Gastrocnemius medialis (tissue), 4 donors: ENCODE measurements at regions of chr1 and their contacts with region 1.

Region 1: DNA sequence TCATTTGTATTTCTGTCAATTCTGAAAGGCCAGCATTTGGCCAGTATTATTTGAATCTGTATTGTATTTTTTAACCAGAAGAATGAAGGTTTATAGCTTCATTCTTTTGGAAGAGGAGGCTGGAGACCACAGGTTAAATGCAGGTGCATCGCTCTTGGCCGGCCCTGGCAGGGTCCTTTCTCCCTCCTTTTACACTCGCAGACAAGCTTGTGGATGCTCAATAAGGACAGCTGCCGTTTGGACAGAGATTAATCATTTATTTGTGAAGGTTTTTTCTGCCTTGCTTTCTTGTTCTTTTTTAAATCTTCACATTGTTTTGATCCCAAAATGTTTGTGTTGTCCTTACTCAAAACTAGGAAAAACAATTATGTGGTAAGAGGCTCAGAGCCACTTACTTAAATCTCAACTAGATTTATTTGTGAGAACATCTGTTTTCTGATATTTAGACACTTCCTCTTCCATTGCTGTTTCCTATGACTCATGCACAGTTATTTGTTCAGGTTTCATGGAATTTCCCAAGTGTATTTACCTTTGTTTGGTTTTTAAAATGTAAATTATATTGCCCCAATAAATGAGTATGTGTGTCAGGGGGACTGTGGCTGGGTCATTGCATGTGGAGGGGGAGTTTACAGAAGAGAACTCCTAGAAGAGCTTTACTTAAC is 46.7 kb upstream of the LAMC2 start:
- DNase-seq: no peak
- ATAC-seq: peak; percentile 29 to 31
- H3K4me3 ChIP-seq: no peak overlapping the region
- H3K27ac ChIP-seq: peak overlapping the region; percentile 62 to 76 (median 70)
- H3K4me1 ChIP-seq: peaks cover 11 to 18% of the 10 kb centered on the region in 2 donors
- H3K27me3 ChIP-seq: no peaks in the 10 kb centered on the region
- CTCF ChIP-seq: no peak
- POLR2A ChIP-seq: no peak

Region 2: GRCh38 chr1:182789138-182790076 is 350.0 kb before region 1 on chr1 and contains the start of gene NPL:
- in situ Hi-C with region 1: no loop called
- intact Hi-C with region 1: no loop called
- DNase-seq: peak; percentile 56 to 78
- ATAC-seq: peak; percentile 91 to 95
- H3K4me3 ChIP-seq: peak within 1 kb of the TSS; percentile 72 to 86 (median 78)
- H3K27ac ChIP-seq: peak within 1 kb of the TSS; percentile 81 to 87 (median 83)
- H3K4me1 ChIP-seq: peaks cover 7 to 9% of the 10 kb centered on the region in 2 donors
- H3K27me3 ChIP-seq: no peaks in the 10 kb centered on the region
- CTCF ChIP-seq: no peak
- POLR2A ChIP-seq: peak; percentile 81 to 97
- total RNA-seq, gene NPL: 2.7 to 6.5 (median 4.3) TPM

Region 3: GRCh38 chr1:183155939-183156338 is 16.5 kb after region 1 on chr1:
- in situ Hi-C with region 1: no loop called
- intact Hi-C with region 1: no loop called
- DNase-seq: no peak
- ATAC-seq: no peak
- H3K4me3 ChIP-seq: no peak overlapping the region
- H3K27ac ChIP-seq: no peak overlapping the region
- H3K4me1 ChIP-seq: no peaks in the 10 kb centered on the region
- H3K27me3 ChIP-seq: no peaks in the 10 kb centered on the region
- CTCF ChIP-seq: no peak
- POLR2A ChIP-seq: no peak

Region 4: DNA sequence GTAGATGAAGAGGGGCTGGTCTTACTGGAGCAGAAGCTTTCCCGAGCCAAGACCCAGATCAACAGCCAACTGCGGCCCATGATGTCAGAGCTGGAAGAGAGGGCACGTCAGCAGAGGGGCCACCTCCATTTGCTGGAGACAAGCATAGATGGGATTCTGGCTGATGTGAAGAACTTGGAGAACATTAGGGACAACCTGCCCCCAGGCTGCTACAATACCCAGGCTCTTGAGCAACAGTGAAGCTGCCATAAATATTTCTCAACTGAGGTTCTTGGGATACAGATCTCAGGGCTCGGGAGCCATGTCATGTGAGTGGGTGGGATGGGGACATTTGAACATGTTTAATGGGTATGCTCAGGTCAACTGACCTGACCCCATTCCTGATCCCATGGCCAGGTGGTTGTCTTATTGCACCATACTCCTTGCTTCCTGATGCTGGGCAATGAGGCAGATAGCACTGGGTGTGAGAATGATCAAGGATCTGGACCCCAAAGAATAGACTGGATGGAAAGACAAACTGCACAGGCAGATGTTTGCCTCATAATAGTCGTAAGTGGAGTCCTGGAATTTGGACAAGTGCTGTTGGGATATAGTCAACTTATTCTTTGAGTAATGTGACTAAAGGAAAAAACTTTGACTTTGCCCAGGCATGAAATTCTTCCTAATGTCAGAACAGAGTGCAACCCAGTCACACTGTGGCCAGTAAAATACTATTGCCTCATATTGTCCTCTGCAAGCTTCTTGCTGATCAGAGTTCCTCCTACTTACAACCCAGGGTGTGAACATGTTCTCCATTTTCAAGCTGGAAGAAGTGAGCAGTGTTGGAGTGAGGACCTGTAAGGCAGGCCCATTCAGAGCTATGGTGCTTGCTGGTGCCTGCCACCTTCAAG is 104.0 kb after region 1 on chr1:
- in situ Hi-C with region 1: loop called in 1 of 4 experiments (anchors 10 kb)
- intact Hi-C with region 1: loop called (anchors 2 kb)
- DNase-seq: peak; percentile 62 to 84
- ATAC-seq: peak; percentile 41 to 63
- H3K4me3 ChIP-seq: no peak overlapping the region
- H3K27ac ChIP-seq: peak overlapping the region; percentile 63 to 81 (median 64)
- H3K4me1 ChIP-seq: peaks cover 0 to 11% of the 10 kb centered on the region in 2 donors
- H3K27me3 ChIP-seq: no peaks in the 10 kb centered on the region
- CTCF ChIP-seq: no peak
- POLR2A ChIP-seq: peak in 1 of 2 donors; percentile 4